OCI-LY7 (cell line): ENCODE measurements at regions of chr12 and their contacts with region 1.

Region 1: GRCh38 chr12:80412369-80412953 is 31.6 kb upstream of the PTPRQ start:
- DNase-seq: peak; percentile 67
- H3K4me3 ChIP-seq: no peak overlapping the region
- H3K27ac ChIP-seq: no peak overlapping the region
- H3K4me1 ChIP-seq: no peaks in the 10 kb centered on the region
- CTCF ChIP-seq: peak; percentile 96

Region 2: DNA sequence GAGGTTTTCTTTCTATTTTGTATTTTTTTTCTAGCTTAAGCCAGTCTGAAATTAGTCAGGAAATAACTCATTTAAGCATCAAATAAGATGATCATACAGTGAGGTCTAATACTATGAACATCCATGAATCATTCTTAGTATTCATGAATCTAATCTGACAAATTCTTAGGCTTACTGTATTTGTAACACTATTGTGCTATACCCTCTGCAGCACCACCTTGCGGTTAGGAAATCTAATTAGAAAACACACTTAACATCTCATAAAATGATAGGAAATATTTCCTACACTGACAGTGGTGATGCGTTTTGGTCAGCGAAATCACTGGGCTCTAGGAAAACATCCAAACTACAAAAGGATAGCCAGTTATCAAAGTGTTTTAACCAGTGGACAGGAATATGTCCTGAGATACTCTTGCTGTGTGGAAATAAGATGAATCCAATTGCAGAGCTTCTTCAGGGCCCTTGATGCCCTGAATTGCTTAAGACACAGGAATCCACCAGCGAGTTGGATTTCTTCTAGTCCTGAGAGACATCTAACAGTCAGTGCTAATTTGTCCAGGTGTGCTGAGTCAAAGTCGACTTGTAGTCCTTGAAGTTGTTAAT is 185.6 kb after region 1 on chr12:
- CTCF ChIA-PET with region 1: no interaction called
- POLR2A ChIA-PET with region 1: no interaction called
- intact Hi-C with region 1: loop called (anchors 5 kb)
- DNase-seq: peak; percentile 53
- H3K4me3 ChIP-seq: no peak overlapping the region
- H3K27ac ChIP-seq: no peak overlapping the region
- H3K4me1 ChIP-seq: no peaks in the 10 kb centered on the region
- CTCF ChIP-seq: peak; percentile 84

Region 3: GRCh38 chr12:80763874-80764273 is 351.4 kb after region 1 on chr12:
- CTCF ChIA-PET with region 1: no interaction called
- POLR2A ChIA-PET with region 1: no interaction called
- intact Hi-C with region 1: loop called (anchors 5 kb)
- DNase-seq: peak; percentile 59
- H3K4me3 ChIP-seq: no peak overlapping the region
- H3K27ac ChIP-seq: no peak overlapping the region
- H3K4me1 ChIP-seq: peaks cover 18% of the 10 kb centered on the region
- CTCF ChIP-seq: peak; percentile 86

Region 4: GRCh38 chr12:81128930-81129554 is 716.6 kb after region 1 on chr12:
- CTCF ChIA-PET with region 1: no interaction called
- POLR2A ChIA-PET with region 1: no interaction called
- intact Hi-C with region 1: loop called (anchors 5 kb)
- DNase-seq: peak; percentile 33
- H3K4me3 ChIP-seq: no peak overlapping the region
- H3K27ac ChIP-seq: no peak overlapping the region
- H3K4me1 ChIP-seq: no peaks in the 10 kb centered on the region
- CTCF ChIP-seq: peak; percentile 88

Region 5: GRCh38 chr12:81257947-81258551 is 845.6 kb after region 1 on chr12:
- CTCF ChIA-PET with region 1: no interaction called
- POLR2A ChIA-PET with region 1: no interaction called
- intact Hi-C with region 1: loop called (anchors 5 kb)
- DNase-seq: peak; percentile 24
- H3K4me3 ChIP-seq: no peak overlapping the region
- H3K27ac ChIP-seq: no peak overlapping the region
- H3K4me1 ChIP-seq: no peaks in the 10 kb centered on the region
- CTCF ChIP-seq: peak; percentile 75